Esophagus muscularis mucosa (tissue), 4 donors: ENCODE measurements at regions of chr9 and their contacts with region 1.

Region 1: DNA sequence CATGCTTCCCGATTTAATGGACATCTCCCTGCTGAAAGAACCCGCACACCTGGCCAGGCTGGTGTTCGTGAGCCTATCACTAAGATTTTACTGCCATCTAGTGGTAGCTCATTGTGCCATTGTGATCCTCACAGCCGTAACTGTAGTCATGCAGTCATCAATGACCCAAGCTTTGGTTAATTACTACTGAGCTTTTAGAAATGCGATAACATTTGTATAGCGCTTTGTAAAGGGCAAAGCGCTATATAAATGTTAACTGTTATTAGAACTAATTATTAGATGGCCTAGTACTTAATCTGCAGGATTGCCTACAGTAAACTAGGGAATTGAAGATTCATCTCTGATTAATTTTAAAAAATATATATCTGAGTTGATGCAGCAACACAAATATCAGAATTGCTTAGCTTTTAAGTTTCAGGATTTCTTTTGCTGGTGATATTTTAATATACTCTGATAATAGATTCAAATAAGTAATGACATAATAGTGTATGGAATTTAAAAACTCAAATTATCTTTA is 90.2 kb downstream of the HACD4 start:
- DNase-seq: no peak
- H3K4me3 ChIP-seq: no peak overlapping the region
- H3K27ac ChIP-seq: no peak overlapping the region
- H3K4me1 ChIP-seq: peaks cover 0 to 12% (median 10%) of the 10 kb centered on the region in 4 donors
- H3K27me3 ChIP-seq: no peaks in the 10 kb centered on the region
- CTCF ChIP-seq: peak; percentile 76 to 82 (median 78)
- EP300 ChIP-seq: no peak
- POLR2A ChIP-seq: no peak

Region 2: DNA sequence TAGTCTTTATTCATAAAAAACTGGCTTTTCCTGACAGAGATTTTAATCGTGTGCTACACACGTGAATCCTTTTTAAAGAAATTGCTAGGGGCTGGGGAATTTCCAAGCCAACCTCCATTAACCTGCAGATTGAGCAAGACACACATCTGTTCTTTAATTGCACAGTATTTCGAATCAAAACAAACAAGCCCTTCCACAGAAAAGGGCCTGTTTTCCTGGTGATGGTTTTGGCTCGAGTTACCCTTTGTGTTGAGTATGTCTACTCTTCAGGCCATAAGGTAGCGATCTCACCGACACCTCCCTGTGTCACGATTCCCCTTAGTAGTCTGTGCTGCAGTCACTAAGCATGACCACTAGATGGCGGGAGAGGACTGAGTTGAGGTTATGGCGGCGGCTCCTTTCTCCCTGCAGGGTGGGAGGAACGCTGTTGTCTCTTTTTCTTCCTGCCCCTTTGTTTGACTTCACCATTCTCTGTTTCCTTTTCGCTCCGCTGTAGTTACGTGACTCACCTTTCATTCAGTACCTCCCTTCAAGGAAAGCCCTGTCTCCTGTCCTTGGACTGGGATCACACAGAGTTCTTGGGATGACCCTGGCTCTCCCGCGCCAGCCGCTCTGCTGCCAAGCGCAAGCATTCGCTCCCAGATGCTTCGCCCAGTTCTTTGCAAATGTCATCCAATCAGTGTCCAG is 1015.3 kb before region 1 on chr9:
- intact Hi-C with region 1: loop called (anchors 5 kb)
- DNase-seq: peak; percentile 94
- H3K4me3 ChIP-seq: peak overlapping the region; percentile 43 to 61 (median 45)
- H3K27ac ChIP-seq: no peak overlapping the region
- H3K4me1 ChIP-seq: peaks cover 0 to 10% (median 7%) of the 10 kb centered on the region in 4 donors
- H3K27me3 ChIP-seq: no peaks in the 10 kb centered on the region
- CTCF ChIP-seq: peak; percentile 93 to 96 (median 94)
- EP300 ChIP-seq: no peak
- POLR2A ChIP-seq: no peak

Region 3: GRCh38 chr9:20884985-20885593 is 56.1 kb before region 1 on chr9:
- intact Hi-C with region 1: loop called (anchors 5 kb)
- DNase-seq: no peak
- H3K4me3 ChIP-seq: no peak overlapping the region
- H3K27ac ChIP-seq: no peak overlapping the region
- H3K4me1 ChIP-seq: no peaks in the 10 kb centered on the region
- H3K27me3 ChIP-seq: no peaks in the 10 kb centered on the region
- CTCF ChIP-seq: peak; percentile 53 to 75 (median 72)
- EP300 ChIP-seq: no peak
- POLR2A ChIP-seq: no peak

Region 4: GRCh38 chr9:21110708-21111576 is 169.7 kb after region 1 on chr9:
- intact Hi-C with region 1: loop called (anchors 5 kb)
- DNase-seq: no peak
- H3K4me3 ChIP-seq: no peak overlapping the region
- H3K27ac ChIP-seq: no peak overlapping the region
- H3K4me1 ChIP-seq: peaks cover 0 to 8% (median 3%) of the 10 kb centered on the region in 4 donors
- H3K27me3 ChIP-seq: no peaks in the 10 kb centered on the region
- CTCF ChIP-seq: peak; percentile 77 to 87 (median 81)
- EP300 ChIP-seq: no peak
- POLR2A ChIP-seq: no peak